HCT116 (cell line): ENCODE measurements at regions of chr9 and their contacts with region 1.

Region 1: GRCh38 chr9:88651682-88652633 is 117.0 kb downstream of the NXNL2 start:
- DNase-seq: no peak
- ATAC-seq: peak; percentile 46; the same call in 1 of the 2 replicates
- H3K4me3 ChIP-seq: no peak overlapping the region
- H3K27ac ChIP-seq: no peak overlapping the region
- H3K4me1 ChIP-seq: peaks cover 2 to 7% of the 10 kb centered on the region in 2 experiments; a peak in 2 of 4 replicates
- H3K27me3 ChIP-seq: no peaks in the 10 kb centered on the region
- CTCF ChIP-seq: no peak
- POLR2A ChIP-seq: no peak
- RAD21 ChIP-seq: no peak

Region 2: GRCh38 chr9:88628114-88628513 is 23.8 kb before region 1 on chr9:
- CTCF ChIA-PET with region 1: no interaction called
- POLR2A ChIA-PET with region 1: no interaction called
- RAD21 ChIA-PET with region 1: no interaction called
- intact Hi-C with region 1: loop called (anchors 1 kb)
- DNase-seq: no peak
- ATAC-seq: no peak
- H3K4me3 ChIP-seq: no peak overlapping the region
- H3K27ac ChIP-seq: no peak overlapping the region
- H3K4me1 ChIP-seq: no peaks in the 10 kb centered on the region
- H3K27me3 ChIP-seq: no peaks in the 10 kb centered on the region
- CTCF ChIP-seq: no peak
- POLR2A ChIP-seq: no peak
- RAD21 ChIP-seq: no peak